ENCODE measurements at regions of chr21 and their contacts with region 1.

Region 1: DNA sequence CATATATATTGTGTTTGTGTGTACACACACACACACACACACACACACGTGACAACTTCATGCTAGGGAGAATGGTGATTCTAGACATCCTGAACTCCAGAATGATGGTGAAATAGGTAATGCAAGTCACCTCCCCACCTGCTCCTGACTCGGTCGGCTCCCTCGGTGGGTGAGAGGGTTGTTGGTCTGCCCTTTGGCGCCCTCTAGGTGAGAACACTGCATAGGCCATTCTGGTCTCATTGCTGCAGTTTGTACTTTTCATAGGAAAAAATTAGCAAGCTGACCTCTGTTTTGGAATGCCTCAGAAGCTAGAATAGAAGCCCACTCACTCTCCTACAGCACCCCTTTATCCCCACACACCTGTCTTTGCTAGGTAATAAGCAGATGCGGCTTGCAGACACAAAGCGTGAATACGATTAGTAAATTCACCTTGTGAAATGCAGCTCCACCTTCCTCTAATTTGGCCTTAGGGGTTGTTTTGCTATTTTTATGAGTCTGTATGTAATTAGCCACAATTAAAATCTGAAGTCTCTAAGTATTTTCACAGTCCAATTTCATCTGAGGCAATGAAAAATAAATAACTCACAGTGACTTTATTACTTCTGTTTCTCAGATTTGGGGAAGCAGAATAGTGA is 130.0 kb upstream of the KCNJ15 start:
- DNase-seq: peak; percentile 75
- ATAC-seq: peak; percentile 84
- H3K4me3 ChIP-seq: no peak overlapping the region
- H3K27ac ChIP-seq: no peak overlapping the region
- H3K4me1 ChIP-seq: no peaks in the 10 kb centered on the region
- H3K27me3 ChIP-seq: peaks cover 33% of the 10 kb centered on the region
- CTCF ChIP-seq: peak; percentile 87

Region 2: DNA sequence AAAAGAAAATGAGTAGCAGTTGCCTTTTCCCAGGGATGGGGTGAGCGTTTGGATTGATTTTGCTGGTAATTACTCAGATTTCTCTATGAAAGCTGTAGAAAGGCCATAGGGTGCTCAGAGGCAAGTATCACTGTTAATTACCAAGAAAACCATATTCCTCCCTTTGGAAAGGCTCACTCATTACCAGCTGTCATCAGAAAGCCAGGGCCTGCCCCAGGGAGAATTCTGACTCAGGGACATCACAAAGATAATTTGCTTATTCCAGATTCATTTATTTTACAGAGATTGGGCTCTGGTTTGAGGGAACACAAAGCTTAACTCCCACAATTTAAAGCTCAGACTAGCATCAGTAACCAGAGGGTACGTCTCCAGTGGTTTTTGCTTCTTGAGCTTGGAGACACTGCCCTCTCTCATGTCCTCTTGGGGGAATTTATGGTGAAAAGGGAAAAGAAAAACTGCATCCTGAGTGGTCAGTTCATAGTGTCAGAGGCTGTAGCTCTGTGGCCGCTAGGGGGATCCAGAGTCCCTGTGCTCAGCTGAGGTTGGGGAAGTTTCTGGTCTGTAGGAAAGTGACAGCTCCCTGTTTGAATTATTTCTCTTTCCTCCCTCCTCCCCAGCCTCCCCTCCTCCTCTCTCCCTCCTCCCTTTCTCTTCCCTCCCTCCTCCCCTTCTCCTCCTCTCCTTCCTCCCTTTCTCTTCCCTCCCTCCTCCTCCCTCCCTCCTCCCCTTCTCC is 414.8 kb before region 1 on chr21:
- CTCF ChIA-PET with region 1: interaction called, 5 read pairs
- POLR2A ChIA-PET with region 1: no interaction called
- intact Hi-C with region 1: loop called (anchors 5 kb)
- DNase-seq: peak; percentile 79
- ATAC-seq: peak; percentile 99
- H3K4me3 ChIP-seq: no peak overlapping the region
- H3K27ac ChIP-seq: no peak overlapping the region
- H3K4me1 ChIP-seq: 0 out of 2 replicates have a peak, but pooled peaks cover 7% of the 10 kb centered on the region
- H3K27me3 ChIP-seq: peaks cover 18% of the 10 kb centered on the region; the same call in 1 of the 2 replicates
- CTCF ChIP-seq: peak; percentile 91

Measured in PC-3 (cell line).